OCI-LY7 (cell line): ENCODE measurements at regions of chr16 and their contacts with region 1.

Region 1: GRCh38 chr16:84277237-84277823 is 17.3 kb upstream of the WFDC1 start:
- DNase-seq: peak; percentile 67
- H3K4me3 ChIP-seq: no peak overlapping the region
- H3K27ac ChIP-seq: no peak overlapping the region
- H3K4me1 ChIP-seq: no peaks in the 10 kb centered on the region
- CTCF ChIP-seq: peak; percentile 93

Region 2: DNA sequence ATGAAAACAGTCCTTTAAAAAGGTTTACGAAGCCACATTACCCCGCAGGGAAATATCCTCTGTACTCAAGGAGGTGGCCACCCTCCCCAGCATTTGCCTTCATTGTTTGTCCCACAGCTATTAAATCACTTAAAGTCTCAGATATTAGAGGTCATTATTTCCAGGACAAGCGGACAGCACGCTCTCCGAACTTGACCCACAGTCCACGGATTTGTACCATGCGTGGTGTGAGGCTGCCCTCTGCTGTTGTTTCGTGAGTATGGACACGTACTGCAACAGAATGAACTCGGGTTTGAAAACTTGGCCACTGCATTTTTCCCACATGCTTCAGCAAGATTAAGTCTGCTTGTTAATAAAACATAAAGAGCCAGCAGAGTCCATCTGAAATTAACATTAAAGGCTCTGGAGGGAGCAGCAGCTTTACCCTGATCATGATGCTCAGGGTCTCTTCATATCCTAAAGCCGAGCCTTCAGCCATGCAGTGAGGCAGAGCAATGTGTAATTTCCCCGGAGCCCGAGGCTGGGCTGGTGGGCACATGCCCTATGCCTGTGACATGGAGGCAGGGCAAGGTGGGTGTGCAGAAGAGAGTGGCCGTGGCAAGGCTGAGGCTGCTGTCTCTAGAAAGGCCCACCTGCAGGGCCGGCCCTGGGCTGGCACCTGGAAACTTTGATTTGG is 207.4 kb after region 1 on chr16:
- CTCF ChIA-PET with region 1: no interaction called
- POLR2A ChIA-PET with region 1: no interaction called
- intact Hi-C with region 1: loop called (anchors 1 kb)
- DNase-seq: peak; percentile 32
- H3K4me3 ChIP-seq: no peak overlapping the region
- H3K27ac ChIP-seq: no peak overlapping the region
- H3K4me1 ChIP-seq: no peaks in the 10 kb centered on the region
- CTCF ChIP-seq: peak; percentile 86